ENCODE measurements at regions of chr5 and their contacts with region 1.

Region 1: GRCh38 chr5:52725065-52725746 is 62.5 kb upstream of the ITGA1 start:
- DNase-seq: no peak
- H3K4me3 ChIP-seq: no peak overlapping the region
- H3K27ac ChIP-seq: peak overlapping the region; percentile 34
- H3K4me1 ChIP-seq: peaks cover 34% of the 10 kb centered on the region
- H3K27me3 ChIP-seq: no peaks in the 10 kb centered on the region
- CTCF ChIP-seq: no peak
- POLR2A ChIP-seq: no peak

Region 2: GRCh38 chr5:52709171-52709925 is 15.9 kb before region 1 on chr5:
- CTCF ChIA-PET with region 1: interaction called, 5 read pairs
- POLR2A ChIA-PET with region 1: no interaction called
- dilution Hi-C with region 1: no loop called
- intact Hi-C with region 1: loop called (anchors 1 kb)
- DNase-seq: peak; percentile 31
- H3K4me3 ChIP-seq: no peak overlapping the region
- H3K27ac ChIP-seq: no peak overlapping the region
- H3K4me1 ChIP-seq: peaks cover 25% of the 10 kb centered on the region
- H3K27me3 ChIP-seq: no peaks in the 10 kb centered on the region
- CTCF ChIP-seq: no peak
- POLR2A ChIP-seq: no peak

Region 3: GRCh38 chr5:52787600-52788504 is 62.6 kb after region 1 on chr5 and contains the starts of genes ITGA1 and PELO:
- CTCF ChIA-PET with region 1: interaction called, 8 read pairs
- POLR2A ChIA-PET with region 1: no interaction called
- dilution Hi-C with region 1: no loop called
- intact Hi-C with region 1: loop called (anchors 5 kb)
- DNase-seq: peak; percentile 77
- H3K4me3 ChIP-seq: peak within 1 kb of the TSS; percentile 35 to 80 (median 62)
- H3K27ac ChIP-seq: peak within 1 kb of the TSS; percentile 19
- H3K4me1 ChIP-seq: peaks cover 11% of the 10 kb centered on the region
- H3K27me3 ChIP-seq: no peaks in the 10 kb centered on the region
- CTCF ChIP-seq: peak; percentile 16 to 51
- POLR2A ChIP-seq: no peak
- total RNA-seq, gene ITGA1: 1.9 and 3.3 TPM in 2 replicates
- total RNA-seq, gene PELO: 10.2 and 13.2 TPM in 2 replicates

Measured in endothelial cell of umbilical vein (primary cell).